Esophagus muscularis mucosa (tissue), 4 donors: ENCODE measurements at regions of chr10 and their contacts with region 1.

Region 1: DNA sequence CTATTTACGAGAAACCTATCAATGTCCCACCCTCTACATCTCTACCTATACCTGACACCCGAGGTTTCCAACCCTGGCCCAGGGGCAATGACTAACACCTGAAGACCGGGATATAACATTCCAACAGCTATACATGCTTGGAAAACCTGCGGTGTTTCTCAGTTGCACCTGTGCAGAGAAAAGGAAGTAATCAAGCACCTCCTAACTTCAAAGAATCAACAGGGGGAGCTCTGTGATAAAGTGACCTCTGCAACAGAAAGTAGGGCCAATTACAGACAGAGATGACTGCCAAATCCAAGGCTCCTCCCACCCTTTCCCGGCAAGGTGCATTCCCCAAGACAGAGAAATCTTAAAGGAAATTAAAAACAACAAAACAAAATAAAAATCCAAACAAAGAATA is 41.3 kb downstream of the CCDC6 start:
- DNase-seq: no peak
- H3K4me3 ChIP-seq: no peak overlapping the region
- H3K27ac ChIP-seq: peak overlapping the region; percentile 3 to 69 (median 44)
- H3K4me1 ChIP-seq: peaks cover 13 to 59% (median 48%) of the 10 kb centered on the region in 4 donors
- H3K27me3 ChIP-seq: no peaks in the 10 kb centered on the region
- CTCF ChIP-seq: peak; percentile 41 to 55 (median 44)
- EP300 ChIP-seq: no peak
- POLR2A ChIP-seq: no peak

Region 2: GRCh38 chr10:59779756-59780533 is 85.2 kb before region 1 on chr10:
- intact Hi-C with region 1: no loop called
- DNase-seq: no peak
- H3K4me3 ChIP-seq: no peak overlapping the region
- H3K27ac ChIP-seq: no peak overlapping the region
- H3K4me1 ChIP-seq: no peaks in the 10 kb centered on the region
- H3K27me3 ChIP-seq: no peaks in the 10 kb centered on the region
- CTCF ChIP-seq: no peak
- EP300 ChIP-seq: no peak
- POLR2A ChIP-seq: no peak

Region 3: GRCh38 chr10:59913547-59914237 is 48.6 kb after region 1 on chr10:
- intact Hi-C with region 1: no loop called
- DNase-seq: no peak
- H3K4me3 ChIP-seq: no peak overlapping the region
- H3K27ac ChIP-seq: no peak overlapping the region
- H3K4me1 ChIP-seq: peaks cover 0 to 10% (median 4%) of the 10 kb centered on the region in 4 donors
- H3K27me3 ChIP-seq: no peaks in the 10 kb centered on the region
- CTCF ChIP-seq: no peak
- EP300 ChIP-seq: no peak
- POLR2A ChIP-seq: no peak

Region 4: GRCh38 chr10:60048091-60048501 is 183.0 kb after region 1 on chr10:
- intact Hi-C with region 1: loop called (anchors 10 kb)
- DNase-seq: no peak
- H3K4me3 ChIP-seq: no peak overlapping the region
- H3K27ac ChIP-seq: no peak overlapping the region
- H3K4me1 ChIP-seq: peaks cover 0 to 17% (median 13%) of the 10 kb centered on the region in 4 donors
- H3K27me3 ChIP-seq: no peaks in the 10 kb centered on the region
- CTCF ChIP-seq: peak; percentile 42 to 56 (median 46)
- EP300 ChIP-seq: no peak
- POLR2A ChIP-seq: no peak